ENCODE measurements at regions of chr4 and their contacts with region 1.

Region 1: DNA sequence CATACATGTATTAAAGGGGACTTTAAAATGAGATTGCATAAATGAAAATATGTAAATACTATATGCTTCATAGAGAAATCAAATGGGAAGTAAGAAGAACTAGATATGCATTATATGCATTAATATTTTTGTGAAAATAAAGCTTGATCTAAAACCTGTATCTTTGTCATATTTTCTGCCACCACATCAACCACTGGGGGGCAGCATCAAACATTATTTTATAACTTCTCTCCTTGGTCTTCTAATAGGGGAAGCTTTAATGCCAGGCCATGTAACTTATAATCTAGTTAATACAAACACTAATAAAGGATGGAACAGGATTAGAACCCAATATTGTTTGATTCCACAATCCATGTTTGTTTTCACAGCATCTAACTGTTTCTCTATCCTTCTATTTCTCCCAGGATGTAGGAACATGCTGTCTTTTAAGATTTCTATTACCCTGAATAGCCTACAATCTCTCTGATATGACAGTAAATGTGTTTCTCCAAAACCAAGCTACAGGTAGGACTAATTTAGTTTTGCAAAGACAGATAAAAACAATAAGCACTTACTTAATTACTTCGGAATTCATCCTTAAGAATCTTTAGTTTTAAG is 10.0 kb downstream of the QRFPR start:
- H3K4me3 ChIP-seq: no peak overlapping the region
- H3K27ac ChIP-seq: no peak overlapping the region
- H3K4me1 ChIP-seq: no peaks in the 10 kb centered on the region
- CTCF ChIP-seq: no peak

Region 2: DNA sequence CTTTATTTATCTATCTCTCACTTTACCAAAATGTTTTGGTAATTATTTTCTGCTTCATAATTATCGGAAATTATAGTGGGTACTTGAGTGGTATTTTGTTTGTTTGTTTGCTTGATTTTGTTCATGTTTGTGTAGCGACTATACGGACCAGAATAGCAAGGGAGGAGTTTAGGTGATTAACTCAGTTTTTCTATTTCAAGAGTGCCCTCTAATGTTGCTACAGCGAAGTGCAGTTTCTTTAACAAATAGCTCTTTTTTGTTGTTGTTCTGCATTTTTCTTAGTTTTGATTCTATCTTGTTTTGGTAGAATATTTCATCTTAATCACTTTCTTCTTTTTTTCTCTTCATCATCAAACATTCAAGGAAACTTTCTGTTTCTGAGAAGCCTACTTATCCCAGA is 50.8 kb after region 1 on chr4:
- CTCF ChIA-PET with region 1: interaction called, 17 read pairs
- POLR2A ChIA-PET with region 1: no interaction called
- H3K4me3 ChIP-seq: no peak overlapping the region
- H3K27ac ChIP-seq: no peak overlapping the region
- H3K4me1 ChIP-seq: no peaks in the 10 kb centered on the region
- CTCF ChIP-seq: no peak

Region 3: GRCh38 chr4:121656269-121656641 is 285.4 kb after region 1 on chr4:
- CTCF ChIA-PET with region 1: interaction called, 14 read pairs
- POLR2A ChIA-PET with region 1: no interaction called
- H3K4me3 ChIP-seq: no peak overlapping the region
- H3K27ac ChIP-seq: no peak overlapping the region
- H3K4me1 ChIP-seq: no peaks in the 10 kb centered on the region
- CTCF ChIP-seq: peak; percentile 59; the same call in 1 of the 2 replicates